ENCODE measurements at regions of chr9 and their contacts with region 1.

Region 1: DNA sequence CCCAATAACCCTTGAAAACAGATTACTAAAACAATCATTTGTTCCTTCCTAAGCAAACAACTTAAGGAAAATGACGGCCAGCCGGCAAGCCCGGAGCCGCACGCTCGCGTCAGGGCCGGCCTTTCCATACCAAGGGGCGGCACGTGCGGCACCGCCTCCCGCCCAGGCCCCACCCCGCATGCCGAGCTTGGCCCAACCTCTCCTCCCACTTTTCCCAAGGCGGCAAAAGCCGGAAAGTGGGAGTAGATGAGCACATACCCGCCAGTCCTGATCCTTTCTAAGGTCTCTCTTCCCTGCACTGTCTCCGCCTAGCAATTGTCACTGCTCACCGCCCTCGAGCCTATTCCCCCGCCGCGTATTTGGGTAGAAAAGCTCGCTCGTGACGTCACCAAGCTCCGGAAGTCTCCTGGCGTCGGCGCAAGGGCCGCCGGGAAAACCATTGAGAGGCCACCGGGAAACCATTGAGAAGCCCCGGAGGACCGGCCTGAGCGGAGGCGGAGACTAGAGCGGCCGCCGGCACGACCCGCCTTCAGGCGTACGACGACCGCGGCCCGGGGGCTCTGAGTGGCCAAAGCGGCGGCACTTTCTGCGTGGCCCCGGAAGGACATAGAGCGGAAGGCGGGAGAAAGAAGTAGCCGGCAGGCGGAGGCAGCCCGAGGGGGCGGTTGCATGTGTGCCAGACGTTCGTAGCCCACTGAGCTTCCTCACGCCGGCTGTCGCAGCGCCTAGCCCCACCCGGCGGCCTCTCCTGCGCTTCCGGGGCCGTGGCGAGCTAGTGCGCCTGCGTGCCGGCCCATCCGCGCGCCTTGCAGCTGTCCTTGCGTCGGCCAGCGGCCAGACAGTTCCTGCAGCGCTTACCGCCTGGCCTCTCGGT is at the starts of genes NCBP1 and TSTD2:
- DNase-seq: peak; percentile 98
- ATAC-seq: peak; percentile 91
- H3K4me3 Mint-ChIP-seq: peak within 1 kb of the TSS; percentile 92
- H3K27ac Mint-ChIP-seq: peak within 1 kb of the TSS; percentile 99
- H3K4me1 Mint-ChIP-seq: peaks cover 48% of the 10 kb centered on the region
- H3K27me3 Mint-ChIP-seq: no peaks in the 10 kb centered on the region
- total RNA-seq, gene NCBP1: 42.2 to 43.0 TPM
- total RNA-seq, gene TSTD2: 12.7 to 15.0 TPM

Region 2: DNA sequence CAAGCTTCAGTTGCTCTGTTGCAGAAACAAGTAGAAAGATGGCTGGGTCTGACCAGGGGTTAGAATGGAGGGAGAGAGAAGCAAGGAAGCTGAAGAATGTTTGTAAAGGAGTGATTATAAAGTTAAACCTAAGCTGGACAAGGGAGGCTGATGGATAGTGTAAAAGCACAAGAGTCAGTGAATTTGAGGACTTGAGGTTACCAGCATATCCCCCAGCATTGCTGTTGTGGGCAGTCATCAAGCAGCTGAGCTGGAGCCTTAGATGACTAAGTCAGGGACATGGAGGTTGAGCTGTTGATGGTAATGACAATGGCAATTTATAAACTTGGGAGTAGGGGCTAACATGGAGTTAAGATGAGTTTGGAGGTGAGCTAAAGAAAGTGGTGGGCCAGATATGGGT is 1626.3 kb before region 1 on chr9:
- CTCF ChIA-PET with region 1: no interaction called
- POLR2A ChIA-PET with region 1: no interaction called
- intact Hi-C with region 1: no loop called
- DNase-seq: no peak
- ATAC-seq: no peak
- H3K4me3 Mint-ChIP-seq: no peak overlapping the region
- H3K27ac Mint-ChIP-seq: no peak overlapping the region
- H3K4me1 Mint-ChIP-seq: peaks cover 2% of the 10 kb centered on the region
- H3K27me3 Mint-ChIP-seq: no peaks in the 10 kb centered on the region

Region 3: GRCh38 chr9:96418074-96418809 is 1215.0 kb before region 1 on chr9 and contains the start of gene ZNF367:
- CTCF ChIA-PET with region 1: no interaction called
- POLR2A ChIA-PET with region 1: interaction called, 3 read pairs
- intact Hi-C with region 1: loop called in 1 of 2 experiments (anchors 1 kb)
- DNase-seq: peak; percentile 97
- ATAC-seq: peak; percentile 81
- H3K4me3 Mint-ChIP-seq: peak within 1 kb of the TSS; percentile 93
- H3K27ac Mint-ChIP-seq: peak within 1 kb of the TSS; percentile 90
- H3K4me1 Mint-ChIP-seq: peaks cover 38% of the 10 kb centered on the region
- H3K27me3 Mint-ChIP-seq: no peaks in the 10 kb centered on the region
- total RNA-seq, gene ZNF367: 22.0 to 24.2 TPM

Region 4: DNA sequence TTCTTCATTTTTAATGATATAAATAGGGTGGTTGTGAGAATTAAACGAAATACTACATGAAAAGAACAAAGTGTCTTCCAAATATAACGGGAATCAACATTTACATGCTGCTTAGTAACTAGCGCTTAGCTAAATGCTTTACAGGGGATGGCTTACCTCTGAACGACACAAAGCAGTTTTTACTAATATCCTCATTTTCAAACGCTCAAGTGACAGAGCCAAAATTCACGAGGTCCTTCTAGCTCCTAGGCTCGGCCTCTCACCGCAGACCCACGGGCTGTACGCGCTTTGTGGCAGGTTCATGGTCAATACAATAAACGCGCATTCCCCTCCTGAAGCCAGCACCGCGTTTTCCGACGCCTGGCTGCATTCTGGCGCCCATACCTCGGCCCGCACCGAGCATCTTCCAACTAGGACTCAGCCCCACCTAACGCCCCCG is 855.8 kb before region 1 on chr9:
- CTCF ChIA-PET with region 1: no interaction called
- POLR2A ChIA-PET with region 1: no interaction called
- intact Hi-C with region 1: loop called in 1 of 2 experiments (anchors 5 kb)
- DNase-seq: no peak
- ATAC-seq: no peak
- H3K4me3 Mint-ChIP-seq: peak overlapping the region; percentile 93
- H3K27ac Mint-ChIP-seq: peak overlapping the region; percentile 95
- H3K4me1 Mint-ChIP-seq: peaks cover 24% of the 10 kb centered on the region
- H3K27me3 Mint-ChIP-seq: no peaks in the 10 kb centered on the region

Region 5: DNA sequence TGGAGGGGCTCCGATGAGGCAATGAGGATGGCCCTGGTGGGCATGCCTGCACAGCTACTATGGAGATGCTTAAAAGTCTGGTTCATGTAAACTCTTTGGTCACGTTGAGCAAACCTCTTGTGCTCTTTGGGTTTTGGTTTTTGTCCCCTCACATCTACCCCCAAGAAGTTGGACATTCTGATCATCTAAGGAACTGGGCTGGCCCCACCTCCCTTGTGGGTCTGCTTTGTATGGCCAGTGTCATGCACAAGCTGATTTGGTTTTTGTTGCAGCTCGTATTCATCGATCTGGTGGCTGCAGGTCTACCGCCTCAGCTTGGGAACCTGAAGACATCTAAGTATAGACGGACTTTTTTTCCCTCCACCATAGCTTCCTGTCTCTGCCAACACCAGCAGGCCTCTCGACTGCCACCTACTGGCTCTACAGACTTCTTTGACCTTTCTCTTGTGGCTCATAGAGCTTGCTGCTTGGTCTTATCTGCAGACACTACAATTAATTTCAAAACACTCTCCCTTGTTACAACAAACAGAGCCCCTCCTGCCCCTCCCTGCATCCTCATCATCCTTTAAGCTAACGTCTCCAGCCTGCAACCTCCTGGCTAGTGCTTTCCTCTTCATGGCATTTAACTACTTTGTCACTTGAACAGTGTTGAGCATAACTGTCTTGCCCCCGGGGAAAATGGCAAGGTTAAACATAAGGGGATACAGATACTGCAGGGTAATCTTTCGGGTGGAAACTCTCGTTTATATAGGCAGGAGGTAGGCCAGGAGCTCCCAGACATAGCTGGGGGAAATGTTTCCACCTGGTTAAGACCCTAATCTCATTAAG is 34.5 kb before region 1 on chr9:
- CTCF ChIA-PET with region 1: interaction called, 13 read pairs
- POLR2A ChIA-PET with region 1: no interaction called
- intact Hi-C with region 1: no loop called
- DNase-seq: peak; percentile 85
- ATAC-seq: peak; percentile 99
- H3K4me3 Mint-ChIP-seq: no peak overlapping the region
- H3K27ac Mint-ChIP-seq: peak overlapping the region; percentile 66
- H3K4me1 Mint-ChIP-seq: peaks cover 7% of the 10 kb centered on the region
- H3K27me3 Mint-ChIP-seq: no peaks in the 10 kb centered on the region

Region 6: GRCh38 chr9:97696803-97697601 is 63.8 kb after region 1 on chr9 and contains the start of gene XPA:
- CTCF ChIA-PET with region 1: interaction called, 10 read pairs
- POLR2A ChIA-PET with region 1: interaction called, 7 read pairs
- intact Hi-C with region 1: loop called (anchors 1 kb)
- DNase-seq: peak; percentile 98
- ATAC-seq: peak; percentile 95
- H3K4me3 Mint-ChIP-seq: peak within 1 kb of the TSS; percentile 81
- H3K27ac Mint-ChIP-seq: peak within 1 kb of the TSS; percentile 92
- H3K4me1 Mint-ChIP-seq: peaks cover 45% of the 10 kb centered on the region
- H3K27me3 Mint-ChIP-seq: peaks cover 2% of the 10 kb centered on the region
- total RNA-seq, gene XPA: 8.7 to 11.1 TPM

Region 7: DNA sequence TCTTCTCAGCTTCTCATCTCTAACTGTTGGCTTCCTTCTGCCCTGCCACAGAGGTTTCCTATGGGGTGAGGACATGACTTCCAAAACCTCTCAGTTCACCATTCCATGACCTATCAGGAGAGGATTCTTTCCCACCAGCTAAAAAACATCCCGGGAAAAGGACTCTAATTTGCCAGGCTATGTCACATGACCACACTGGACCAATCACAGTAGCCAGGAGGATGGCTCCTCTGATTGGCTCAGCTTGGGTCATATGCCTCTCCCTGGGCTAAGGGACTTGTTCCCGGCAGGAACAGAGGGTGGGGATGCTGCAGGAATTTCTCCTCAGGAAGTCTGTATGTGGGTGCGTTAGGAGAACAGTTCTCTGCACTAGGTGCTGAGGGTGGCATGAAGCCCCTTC is 104.2 kb after region 1 on chr9:
- CTCF ChIA-PET with region 1: no interaction called
- POLR2A ChIA-PET with region 1: no interaction called
- intact Hi-C with region 1: no loop called
- DNase-seq: peak; percentile 10
- ATAC-seq: no peak
- H3K4me3 Mint-ChIP-seq: no peak overlapping the region
- H3K27ac Mint-ChIP-seq: no peak overlapping the region
- H3K4me1 Mint-ChIP-seq: peaks cover 6% of the 10 kb centered on the region
- H3K27me3 Mint-ChIP-seq: peaks cover 34% of the 10 kb centered on the region

Region 8: GRCh38 chr9:97900738-97901565 is 267.7 kb after region 1 on chr9:
- CTCF ChIA-PET with region 1: interaction called, 3 read pairs
- POLR2A ChIA-PET with region 1: no interaction called
- intact Hi-C with region 1: loop called in 1 of 2 experiments (anchors 5 kb)
- DNase-seq: no peak
- ATAC-seq: no peak
- H3K4me3 Mint-ChIP-seq: no peak overlapping the region
- H3K27ac Mint-ChIP-seq: peak overlapping the region; percentile 56
- H3K4me1 Mint-ChIP-seq: peaks cover 53% of the 10 kb centered on the region
- H3K27me3 Mint-ChIP-seq: no peaks in the 10 kb centered on the region

Region 9: DNA sequence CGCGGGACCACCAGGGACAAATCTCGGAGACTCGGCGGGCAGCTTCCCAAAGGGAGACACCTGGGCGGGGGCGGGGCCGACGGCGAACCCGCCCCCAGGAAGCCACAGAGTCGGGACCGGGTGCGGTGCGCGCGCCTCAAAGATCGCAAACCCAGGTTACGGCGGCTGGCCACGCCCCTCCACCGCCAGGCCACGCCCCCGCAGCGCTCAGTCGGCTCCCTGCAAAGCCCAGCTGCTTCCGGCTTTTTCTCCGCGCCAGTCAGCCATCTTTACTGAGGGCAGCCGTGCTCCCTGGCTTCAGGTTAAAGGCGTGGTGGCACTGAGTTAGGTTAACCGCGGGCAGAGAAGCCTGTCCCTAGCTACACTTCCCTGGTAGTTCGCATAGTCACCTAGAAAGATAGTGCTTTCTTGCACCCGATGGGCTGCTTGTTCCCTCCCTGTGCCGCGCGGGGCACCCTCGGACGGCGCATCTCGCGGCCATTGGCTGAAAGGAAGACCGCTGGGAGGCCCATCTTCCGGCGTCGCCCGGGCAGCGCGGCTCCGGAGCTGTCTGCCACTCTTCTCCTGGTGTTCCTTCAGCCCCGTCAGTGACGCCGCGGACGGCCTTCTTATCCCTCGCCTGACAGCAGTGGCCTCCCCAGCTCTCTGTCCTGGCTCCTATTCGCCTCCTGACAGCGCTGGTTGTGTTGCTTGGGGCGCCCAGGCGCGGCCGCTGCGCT is 622.5 kb after region 1 on chr9 and contains the start of gene TBC1D2:
- CTCF ChIA-PET with region 1: no interaction called
- POLR2A ChIA-PET with region 1: no interaction called
- intact Hi-C with region 1: loop called in 1 of 2 experiments (anchors 1 kb)
- DNase-seq: peak; percentile 99
- ATAC-seq: peak; percentile 87
- H3K4me3 Mint-ChIP-seq: peak within 1 kb of the TSS; percentile 94
- H3K27ac Mint-ChIP-seq: peak within 1 kb of the TSS; percentile 98
- H3K4me1 Mint-ChIP-seq: peaks cover 17% of the 10 kb centered on the region
- H3K27me3 Mint-ChIP-seq: no peaks in the 10 kb centered on the region
- total RNA-seq, gene TBC1D2: 2.8 to 3.2 TPM